AG04450 (cell line): ENCODE measurements at regions of chr11 and their contacts with region 1.

Region 1: DNA sequence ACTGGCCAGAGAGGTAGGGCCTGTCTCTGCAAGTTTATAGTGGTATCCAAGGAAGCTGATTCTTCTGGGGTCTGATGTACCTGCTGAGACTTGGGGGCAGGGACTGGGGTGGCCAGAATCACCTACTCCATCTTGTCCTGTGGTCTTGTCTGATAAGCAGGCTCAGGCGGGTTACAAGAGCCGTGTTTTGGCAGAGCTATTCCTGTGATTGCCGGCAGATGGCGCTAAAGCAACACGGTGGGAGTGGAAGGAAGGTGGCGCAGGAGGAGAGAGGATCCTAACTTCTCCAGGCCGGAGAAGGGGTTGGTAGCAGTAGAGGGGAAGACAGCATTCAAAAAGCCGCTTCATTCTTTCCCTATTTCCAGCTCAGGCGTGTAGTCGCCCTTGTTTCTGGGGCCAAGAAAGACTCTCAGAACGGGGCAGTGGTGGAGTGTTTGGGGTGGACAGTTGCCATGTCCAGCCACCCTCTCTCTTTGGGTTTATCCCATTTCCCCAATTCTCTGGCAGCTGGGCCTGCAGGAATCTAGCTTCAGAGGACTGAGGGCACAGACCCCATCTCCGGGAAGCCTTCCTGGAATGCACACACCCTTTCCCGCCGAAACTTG is 15.1 kb downstream of the CHRM1 start:
- DNase-seq: peak; percentile 69
- H3K4me3 ChIP-seq: no peak overlapping the region
- H3K27ac ChIP-seq: no peak overlapping the region
- H3K27me3 ChIP-seq: peaks cover 14% of the 10 kb centered on the region
- CTCF ChIP-seq: peak; percentile 100

Region 2: DNA sequence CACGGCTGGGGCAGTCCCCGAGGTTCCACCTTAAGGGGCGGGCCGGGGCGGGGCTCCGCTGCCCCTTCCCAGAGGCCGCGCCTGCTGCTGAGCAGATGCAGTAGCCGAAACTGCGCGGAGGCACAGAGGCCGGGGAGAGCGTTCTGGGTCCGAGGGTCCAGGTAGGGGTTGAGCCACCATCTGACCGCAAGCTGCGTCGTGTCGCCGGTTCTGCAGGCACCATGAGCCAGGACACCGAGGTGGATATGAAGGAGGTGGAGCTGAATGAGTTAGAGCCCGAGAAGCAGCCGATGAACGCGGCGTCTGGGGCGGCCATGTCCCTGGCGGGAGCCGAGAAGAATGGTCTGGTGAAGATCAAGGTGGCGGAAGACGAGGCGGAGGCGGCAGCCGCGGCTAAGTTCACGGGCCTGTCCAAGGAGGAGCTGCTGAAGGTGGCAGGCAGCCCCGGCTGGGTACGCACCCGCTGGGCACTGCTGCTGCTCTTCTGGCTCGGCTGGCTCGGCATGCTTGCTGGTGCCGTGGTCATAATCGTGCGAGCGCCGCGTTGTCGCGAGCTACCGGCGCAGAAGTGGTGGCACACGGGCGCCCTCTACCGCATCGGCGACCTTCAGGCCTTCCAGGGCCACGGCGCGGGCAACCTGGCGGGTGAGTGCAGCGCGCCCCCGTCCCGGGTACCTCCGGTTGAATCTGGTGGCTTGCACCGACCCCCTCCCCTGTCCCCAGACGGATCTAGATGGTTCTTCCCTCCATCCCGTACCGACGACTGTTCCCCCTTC is 25.0 kb before region 1 on chr11 and contains the start of gene SLC3A2:
- CTCF ChIA-PET with region 1: interaction called, 13 read pairs
- POLR2A ChIA-PET with region 1: no interaction called
- DNase-seq: peak; percentile 56
- H3K4me3 ChIP-seq: peak within 1 kb of the TSS; percentile 100
- H3K27ac ChIP-seq: peak within 1 kb of the TSS; percentile 99
- H3K27me3 ChIP-seq: no peaks in the 10 kb centered on the region
- CTCF ChIP-seq: peak; percentile 50; the same call in 1 of the 2 replicates
- polyA plus RNA-seq, gene SLC3A2: 263 and 284 TPM in 2 replicates

Region 3: GRCh38 chr11:62922658-62923431 is 16.8 kb after region 1 on chr11:
- CTCF ChIA-PET with region 1: interaction called, 58 read pairs
- POLR2A ChIA-PET with region 1: no interaction called
- DNase-seq: no peak
- H3K4me3 ChIP-seq: peak overlapping the region; percentile 22; the same call in 1 of the 2 replicates
- H3K27ac ChIP-seq: no peak overlapping the region
- H3K27me3 ChIP-seq: peaks cover 74% of the 10 kb centered on the region
- CTCF ChIP-seq: peak; percentile 55

Region 4: DNA sequence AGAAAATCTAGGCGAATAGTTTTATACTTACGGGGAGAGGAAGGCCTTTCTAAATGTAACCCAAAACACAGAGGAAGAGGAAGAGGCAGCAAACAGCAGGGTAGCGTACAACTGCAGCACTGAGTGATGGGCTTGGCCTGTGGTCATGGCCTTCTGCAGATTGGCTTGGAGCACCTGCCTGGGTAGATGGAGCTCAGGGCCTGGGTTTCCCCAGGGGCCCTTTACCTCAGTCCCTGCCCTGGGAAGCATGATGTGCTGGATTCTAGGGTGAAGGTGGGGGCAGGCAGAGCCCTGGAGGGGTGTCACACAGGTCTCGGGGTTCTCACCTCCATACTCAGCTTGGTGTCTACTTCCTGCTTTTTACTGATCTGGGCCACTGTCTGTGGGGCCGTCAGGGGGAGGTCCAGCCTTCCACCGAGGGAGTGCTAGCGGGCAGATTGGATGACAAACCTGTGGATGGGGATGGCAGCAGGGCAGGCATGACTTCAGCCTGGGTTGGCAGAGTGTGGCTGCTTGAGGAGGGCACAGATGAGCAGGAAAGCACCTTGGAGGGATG is 42.8 kb after region 1 on chr11:
- CTCF ChIA-PET with region 1: interaction called, 10 read pairs
- POLR2A ChIA-PET with region 1: no interaction called
- DNase-seq: no peak
- H3K4me3 ChIP-seq: no peak overlapping the region
- H3K27ac ChIP-seq: no peak overlapping the region
- H3K27me3 ChIP-seq: peaks cover 5% of the 10 kb centered on the region
- CTCF ChIP-seq: no peak

Region 5: GRCh38 chr11:63032457-63032856 is 126.4 kb after region 1 on chr11:
- CTCF ChIA-PET with region 1: interaction called, 63 read pairs
- POLR2A ChIA-PET with region 1: no interaction called
- DNase-seq: no peak
- H3K4me3 ChIP-seq: no peak overlapping the region
- H3K27ac ChIP-seq: no peak overlapping the region
- H3K27me3 ChIP-seq: peaks cover 11% of the 10 kb centered on the region
- CTCF ChIP-seq: no peak